A549 (cell line): ENCODE measurements at regions of chr3 and their contacts with region 1.

Region 1: GRCh38 chr3:29324180-29324651 is 43.3 kb downstream of the RBMS3 start:
- DNase-seq: peak; percentile 18 to 92
- ATAC-seq: peak; percentile 99
- H3K4me3 ChIP-seq: peak overlapping the region; percentile 27
- H3K27ac ChIP-seq: peak overlapping the region; percentile 74 to 85
- H3K4me1 ChIP-seq: peaks cover 38% of the 10 kb centered on the region
- CTCF ChIP-seq: no peak
- EP300 ChIP-seq: no peak
- POLR2A ChIP-seq: no peak
- RAD21 ChIP-seq: no peak

Region 2: DNA sequence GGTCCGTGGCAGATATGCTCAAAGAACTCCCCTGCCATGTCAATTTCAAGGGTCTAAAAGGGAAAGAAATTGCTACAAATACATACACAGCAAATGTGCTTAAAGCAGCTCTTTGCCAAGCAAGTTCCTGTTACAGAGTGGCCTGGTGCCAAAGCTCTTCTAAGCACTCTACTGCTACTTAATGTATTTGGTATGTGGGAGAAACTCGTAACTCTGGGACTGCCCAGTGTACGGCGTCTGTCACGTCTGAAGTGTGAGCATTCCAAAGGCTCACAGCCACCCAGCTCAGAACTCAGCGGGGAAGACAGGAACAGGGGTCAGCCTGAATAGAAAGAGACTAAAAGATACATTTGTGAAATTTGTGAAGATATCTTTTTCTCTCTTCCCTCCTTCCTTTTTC is 11.2 kb after region 1 on chr3:
- CTCF ChIA-PET with region 1: interaction called, 10 read pairs
- POLR2A ChIA-PET with region 1: no interaction called
- DNase-seq: peak; percentile 51 to 89
- ATAC-seq: peak; percentile 89 to 97
- H3K4me3 ChIP-seq: peak overlapping the region; percentile 30
- H3K27ac ChIP-seq: peak overlapping the region; percentile 75 to 82
- H3K4me1 ChIP-seq: peaks cover 54% of the 10 kb centered on the region
- CTCF ChIP-seq: no peak
- EP300 ChIP-seq: no peak
- POLR2A ChIP-seq: no peak
- RAD21 ChIP-seq: peak; percentile 14 to 29; a peak in 2 of 5 replicates